ENCODE measurements at regions of chr10 and their contacts with region 1.

Region 1: GRCh38 chr10:103367782-103368518 is at the start of gene TAF5:
- DNase-seq: peak; percentile 95
- H3K4me3 Mint-ChIP-seq: peak within 1 kb of the TSS; percentile 91
- H3K27ac Mint-ChIP-seq: peak within 1 kb of the TSS; percentile 94
- H3K4me1 Mint-ChIP-seq: peaks cover 26% of the 10 kb centered on the region
- H3K27me3 Mint-ChIP-seq: no peaks in the 10 kb centered on the region
- total RNA-seq, gene TAF5: 13.2 to 15.1 TPM

Region 2: DNA sequence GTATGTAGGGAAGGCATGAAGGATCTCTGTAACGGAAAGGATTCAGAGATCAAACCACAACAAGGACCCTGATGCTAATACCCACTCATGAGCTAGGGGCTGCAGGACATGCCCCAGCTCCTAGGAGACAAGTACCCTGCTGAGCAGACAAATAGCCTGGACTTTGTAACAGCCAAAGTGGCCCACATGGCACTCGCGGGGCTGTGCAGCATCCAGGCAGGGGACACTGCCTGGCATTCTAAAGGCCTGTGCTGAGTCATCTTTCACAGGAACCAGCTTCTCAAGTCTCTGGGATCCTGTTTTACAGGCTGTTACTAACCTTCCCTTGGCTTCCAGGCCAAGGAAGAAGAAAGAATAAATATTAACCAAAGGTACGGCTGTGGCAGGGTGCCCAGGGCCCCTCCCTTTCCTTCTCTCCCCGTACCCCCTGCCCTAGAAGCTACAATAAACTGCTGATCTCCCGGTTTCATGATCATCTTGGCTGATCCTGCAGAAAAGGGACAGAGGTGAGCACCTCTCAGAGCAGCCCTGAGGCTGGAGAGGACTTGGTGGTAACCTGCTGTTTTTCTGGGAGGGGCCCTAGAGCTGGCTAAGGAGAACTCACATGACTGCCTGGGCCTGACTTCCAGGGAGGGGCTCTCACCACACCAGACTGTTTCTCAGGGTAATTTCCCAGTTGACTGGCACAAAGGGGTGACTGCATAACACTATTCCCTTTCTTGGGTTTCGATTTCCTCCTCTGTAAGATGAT is 126.5 kb before region 1 on chr10:
- CTCF ChIA-PET with region 1: no interaction called
- POLR2A ChIA-PET with region 1: no interaction called
- DNase-seq: no peak
- H3K4me3 Mint-ChIP-seq: no peak overlapping the region
- H3K27ac Mint-ChIP-seq: peak overlapping the region; percentile 51
- H3K4me1 Mint-ChIP-seq: peaks cover 24% of the 10 kb centered on the region
- H3K27me3 Mint-ChIP-seq: no peaks in the 10 kb centered on the region

Region 3: DNA sequence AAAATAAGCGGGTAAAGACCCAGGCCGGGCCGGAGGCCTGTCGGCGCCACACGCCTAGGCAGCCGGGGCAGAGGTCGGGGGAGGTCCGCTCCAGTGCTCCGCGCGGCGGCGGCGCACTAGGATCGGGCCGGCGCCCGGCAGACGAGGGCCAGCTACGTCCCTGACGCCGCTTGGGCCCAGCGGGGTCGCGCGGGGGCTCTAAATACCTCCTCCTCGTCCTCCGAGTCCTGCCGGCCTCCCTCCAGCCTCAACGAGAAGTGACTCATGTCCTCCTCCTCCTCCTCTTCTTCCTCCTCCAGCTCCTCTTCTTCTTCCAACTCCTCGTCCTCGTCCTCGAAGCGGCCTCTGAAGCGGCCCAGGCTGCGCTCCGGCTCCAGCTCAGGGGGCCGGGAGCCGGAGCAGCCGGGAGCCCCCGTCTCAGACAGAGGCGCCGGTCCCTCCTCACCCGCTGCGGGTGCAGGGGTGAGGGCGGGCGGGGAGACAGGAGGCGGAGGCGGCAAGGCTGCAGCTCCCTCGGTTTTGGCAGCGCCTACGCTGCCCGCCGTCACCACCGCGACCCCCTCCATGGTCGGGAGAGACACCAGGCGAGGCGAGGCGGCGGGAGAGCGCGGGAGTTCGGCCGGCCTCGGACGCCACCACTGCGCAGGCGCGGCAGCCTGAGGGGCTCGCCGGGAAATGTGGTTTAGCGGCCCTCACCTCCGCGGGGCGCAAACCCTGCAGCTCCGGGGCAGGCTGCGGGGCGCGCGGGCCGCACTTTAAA is 17.3 kb before region 1 on chr10 and contains the start of gene PCGF6:
- CTCF ChIA-PET with region 1: interaction called, 17 read pairs
- POLR2A ChIA-PET with region 1: no interaction called
- DNase-seq: peak; percentile 66
- H3K4me3 Mint-ChIP-seq: peak within 1 kb of the TSS; percentile 90
- H3K27ac Mint-ChIP-seq: peak within 1 kb of the TSS; percentile 92
- H3K4me1 Mint-ChIP-seq: peaks cover 12% of the 10 kb centered on the region
- H3K27me3 Mint-ChIP-seq: no peaks in the 10 kb centered on the region
- total RNA-seq, gene PCGF6: 12.2 to 13.0 TPM

Region 4: DNA sequence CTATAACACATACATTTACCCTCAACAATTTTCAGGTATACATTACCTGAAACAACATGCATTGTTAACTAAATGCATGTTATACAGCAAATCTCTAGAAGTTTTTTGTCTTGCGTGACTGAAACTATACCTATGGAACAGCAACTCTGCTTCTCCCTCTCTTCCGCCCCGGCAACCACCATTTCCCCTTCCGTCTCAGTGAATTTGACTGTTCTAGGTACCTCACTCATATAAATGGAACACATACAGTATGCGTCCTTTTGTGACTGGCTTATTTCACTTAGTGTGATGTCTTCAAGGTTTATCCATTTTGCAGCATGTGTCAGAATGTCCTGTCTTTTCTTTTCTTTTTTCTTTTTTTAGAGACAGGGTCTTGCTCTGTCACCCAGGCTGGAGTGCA is 61.7 kb after region 1 on chr10:
- CTCF ChIA-PET with region 1: no interaction called
- POLR2A ChIA-PET with region 1: no interaction called
- DNase-seq: peak; percentile 48
- H3K4me3 Mint-ChIP-seq: peak overlapping the region; percentile 19
- H3K27ac Mint-ChIP-seq: peak overlapping the region; percentile 77
- H3K4me1 Mint-ChIP-seq: peaks cover 58% of the 10 kb centered on the region
- H3K27me3 Mint-ChIP-seq: no peaks in the 10 kb centered on the region

Region 5: DNA sequence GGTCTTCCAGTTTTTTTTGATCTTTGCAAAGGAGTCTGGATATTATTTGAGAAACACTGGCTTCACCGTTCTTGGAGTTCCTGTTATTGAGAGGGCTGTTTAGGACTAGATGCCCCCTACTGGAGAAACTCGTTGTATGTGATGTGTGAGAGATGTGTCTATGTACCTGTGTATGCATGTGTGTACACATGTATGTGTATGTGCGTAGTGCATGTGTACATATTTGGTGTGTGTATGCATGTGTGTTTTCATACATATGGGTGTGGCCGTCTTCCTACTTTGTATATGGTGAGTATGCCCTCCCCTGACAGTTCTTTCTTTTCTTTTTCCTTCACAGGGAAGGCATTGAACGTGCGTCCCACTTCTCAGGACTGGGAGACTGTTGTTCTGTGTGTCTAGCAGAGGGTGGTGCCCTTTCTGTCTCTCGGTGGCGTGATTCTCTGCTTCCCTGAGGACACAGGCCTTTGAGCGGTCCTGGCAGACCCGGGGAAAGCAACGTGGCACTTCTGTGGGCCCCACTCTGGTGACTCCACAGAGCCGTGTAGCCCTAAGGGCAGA is 114.1 kb after region 1 on chr10:
- CTCF ChIA-PET with region 1: no interaction called
- POLR2A ChIA-PET with region 1: no interaction called
- DNase-seq: peak; percentile 74
- H3K4me3 Mint-ChIP-seq: no peak overlapping the region
- H3K27ac Mint-ChIP-seq: peak overlapping the region; percentile 22
- H3K4me1 Mint-ChIP-seq: peaks cover 26% of the 10 kb centered on the region
- H3K27me3 Mint-ChIP-seq: peaks cover 2% of the 10 kb centered on the region